Breast epithelium (tissue), 4 donors: ENCODE measurements at regions of chr1 and their contacts with region 1.

Region 1: DNA sequence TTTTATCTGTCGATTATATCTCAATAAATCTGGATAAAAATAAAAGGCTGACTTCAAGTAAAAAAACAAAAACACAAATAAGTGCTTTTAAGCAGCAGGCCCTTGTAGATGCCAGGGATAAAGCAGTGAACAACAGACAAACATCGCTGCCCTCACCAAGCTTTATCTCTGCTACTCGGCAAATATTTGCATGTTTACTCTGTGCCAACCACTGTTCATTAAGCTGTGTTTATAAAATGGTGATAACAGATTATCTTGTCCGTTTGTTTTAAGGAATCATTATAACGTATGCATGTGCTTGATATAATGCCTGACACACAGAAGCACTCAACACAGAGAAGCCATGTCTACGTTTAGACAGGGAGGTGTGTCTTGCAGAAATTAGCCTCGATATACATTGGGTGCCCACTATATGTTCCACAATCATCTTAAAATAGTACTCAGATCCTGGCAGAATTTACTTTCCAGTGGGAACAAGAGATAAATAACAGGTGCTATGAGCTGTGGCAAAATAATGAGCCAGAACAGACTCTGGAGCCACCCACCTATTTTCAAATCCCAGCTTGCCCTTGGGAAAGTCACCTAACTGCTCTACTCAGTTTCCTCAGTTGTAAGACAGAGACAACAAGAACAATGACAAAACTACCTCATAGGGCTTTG is 47.2 kb downstream of the TRIT1 start:
- DNase-seq: no peak
- H3K4me3 ChIP-seq: no peak overlapping the region
- H3K27ac ChIP-seq: no peak overlapping the region
- H3K4me1 ChIP-seq: no peaks in the 10 kb centered on the region
- H3K27me3 ChIP-seq: no peaks in the 10 kb centered on the region
- CTCF ChIP-seq: no peak
- POLR2A ChIP-seq: no peak

Region 2: GRCh38 chr1:39183503-39184353 is 652.3 kb before region 1 on chr1:
- intact Hi-C with region 1: no loop called
- DNase-seq: peak; percentile 65 to 89
- H3K4me3 ChIP-seq: no peak overlapping the region
- H3K27ac ChIP-seq: peak overlapping the region; percentile 82 to 93
- H3K4me1 ChIP-seq: peaks cover 0 to 19% of the 10 kb centered on the region in 2 donors
- H3K27me3 ChIP-seq: no peaks in the 10 kb centered on the region
- CTCF ChIP-seq: peak; percentile 45 to 77 (median 58)
- POLR2A ChIP-seq: no peak

Region 3: DNA sequence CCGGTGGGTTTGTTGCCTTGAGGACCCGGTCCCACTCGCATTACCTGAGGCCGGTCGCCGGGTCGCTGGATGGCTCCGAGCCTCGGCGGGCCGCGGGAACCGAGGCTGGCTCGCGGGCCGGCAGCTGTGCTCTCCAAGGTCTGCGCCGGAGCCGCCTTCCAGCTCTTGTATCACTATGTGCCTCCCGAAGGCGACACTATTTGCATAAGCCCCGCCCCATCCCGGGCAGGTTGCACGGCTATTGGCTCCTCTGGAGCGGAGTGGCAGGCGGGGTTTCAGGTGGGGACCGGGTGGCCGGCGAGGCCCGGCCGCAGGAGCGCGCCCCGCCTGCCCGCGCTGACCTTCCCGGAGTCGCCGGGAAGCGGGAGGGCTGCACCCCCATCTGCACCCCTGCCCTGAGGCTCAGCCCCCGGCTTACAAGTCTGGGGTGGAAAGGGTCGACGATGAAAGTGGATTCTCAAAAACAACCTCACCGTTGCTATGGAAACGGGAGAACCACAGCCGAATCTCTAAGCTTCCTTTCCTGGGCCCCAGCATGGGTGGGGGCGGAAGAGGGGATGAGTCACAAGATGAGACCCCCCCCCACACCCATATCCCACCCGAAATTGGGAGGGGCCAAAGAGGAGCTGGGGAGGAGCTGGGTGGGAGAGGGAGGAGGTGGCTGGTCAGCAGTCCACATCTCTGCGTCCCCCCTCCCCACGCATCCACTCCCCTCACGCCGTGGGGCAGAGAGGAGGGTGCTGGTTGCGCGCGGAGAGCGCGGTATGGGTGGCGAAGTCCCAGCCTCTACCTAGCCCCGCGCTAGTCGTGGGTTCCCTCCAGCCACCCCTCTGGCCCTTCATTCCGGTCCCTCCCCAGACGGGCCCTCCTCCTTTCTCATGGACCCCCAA is 144.6 kb before region 1 on chr1 and contains the start of gene HPCAL4:
- intact Hi-C with region 1: no loop called
- DNase-seq: peak; percentile 81 to 84
- H3K4me3 ChIP-seq: peak within 1 kb of the TSS; percentile 25 to 67 (median 49)
- H3K27ac ChIP-seq: no peak within 1 kb of the TSS
- H3K4me1 ChIP-seq: peaks cover 0 to 4% of the 10 kb centered on the region in 2 donors
- H3K27me3 ChIP-seq: peaks cover 4 to 34% of the 10 kb centered on the region in 2 donors
- CTCF ChIP-seq: no peak
- POLR2A ChIP-seq: no peak
- total RNA-seq, gene HPCAL4: not detected

Region 4: DNA sequence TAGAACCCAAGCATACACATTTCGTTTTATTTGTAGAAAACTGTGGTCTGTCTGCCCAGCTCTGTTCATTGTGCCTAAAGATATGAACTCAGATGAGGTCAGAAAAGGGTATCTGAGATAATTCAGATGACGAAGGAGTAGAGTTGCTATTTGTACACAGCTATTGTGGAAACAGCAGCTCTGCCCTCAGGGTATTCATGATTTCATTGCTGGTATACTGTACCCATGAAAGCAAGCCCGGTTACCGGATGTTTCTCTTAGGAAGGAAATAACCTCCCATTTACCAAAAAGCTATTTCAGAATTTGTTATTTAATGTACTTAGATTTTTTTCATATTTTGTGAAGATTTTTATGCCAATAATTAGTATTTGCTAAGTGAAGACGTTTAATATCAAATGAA is 575.2 kb after region 1 on chr1:
- intact Hi-C with region 1: loop called (anchors 5 kb)
- DNase-seq: no peak
- H3K4me3 ChIP-seq: no peak overlapping the region
- H3K27ac ChIP-seq: peak overlapping the region in 1 of 2 donors; percentile 2
- H3K4me1 ChIP-seq: no peaks in the 10 kb centered on the region
- H3K27me3 ChIP-seq: no peaks in the 10 kb centered on the region
- CTCF ChIP-seq: no peak
- POLR2A ChIP-seq: no peak